ENCODE measurements at regions of chr6 and their contacts with region 1.

Region 1: GRCh38 chr6:133083248-133083967 is 157.7 kb upstream of the EYA4 start:
- DNase-seq: peak in 1 of 2 experiments; percentile 36
- H3K4me3 ChIP-seq: no peak overlapping the region
- H3K27ac ChIP-seq: no peak overlapping the region
- H3K4me1 ChIP-seq: no peaks in the 10 kb centered on the region
- H3K27me3 ChIP-seq: no peaks in the 10 kb centered on the region
- CTCF ChIP-seq: no peak

Region 2: DNA sequence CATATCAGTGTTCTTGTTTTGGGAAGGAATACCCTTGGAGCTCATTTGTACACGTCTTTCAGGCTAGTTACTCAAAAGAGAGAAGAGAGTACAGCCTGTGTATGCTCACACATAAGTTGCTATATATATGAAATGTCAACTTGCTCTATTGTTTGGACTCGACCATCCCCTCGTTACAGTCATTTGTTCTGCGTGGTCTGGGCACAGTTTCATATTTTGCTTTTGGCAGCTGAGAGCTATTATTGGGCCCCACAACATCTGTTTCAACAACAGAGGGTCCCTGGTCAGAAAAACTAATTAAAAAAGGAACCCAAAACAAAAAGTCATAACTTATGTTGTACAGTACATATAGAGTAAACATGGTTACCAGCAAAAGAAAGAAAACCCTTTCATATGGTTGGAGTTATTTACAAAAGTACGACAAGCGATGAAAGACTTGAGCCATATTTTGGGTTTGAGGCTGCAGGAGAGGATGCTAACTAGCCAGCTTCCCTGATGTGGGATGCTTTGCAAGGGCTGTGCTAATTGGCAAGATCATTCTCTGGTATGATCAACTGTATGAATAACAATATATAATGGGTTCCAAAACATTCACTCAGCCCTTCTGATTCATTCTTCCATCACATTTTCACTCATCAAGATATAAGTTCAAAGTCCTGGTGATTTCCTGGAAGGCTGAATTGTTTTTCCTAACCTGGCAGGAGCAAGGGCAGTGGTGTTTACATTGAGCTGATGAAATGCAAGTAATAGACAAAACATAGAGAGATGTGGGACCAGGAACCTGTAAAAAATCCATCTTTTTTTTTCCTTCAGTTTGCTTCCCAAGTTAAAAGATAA is 131.2 kb before region 1 on chr6:
- CTCF ChIA-PET with region 1: no interaction called
- POLR2A ChIA-PET with region 1: no interaction called
- intact Hi-C with region 1: no loop called
- DNase-seq: no peak
- H3K4me3 ChIP-seq: no peak overlapping the region
- H3K27ac ChIP-seq: no peak overlapping the region
- H3K4me1 ChIP-seq: no peaks in the 10 kb centered on the region
- H3K27me3 ChIP-seq: no peaks in the 10 kb centered on the region
- CTCF ChIP-seq: no peak

Region 3: GRCh38 chr6:133033263-133033662 is 50.1 kb before region 1 on chr6:
- CTCF ChIA-PET with region 1: no interaction called
- POLR2A ChIA-PET with region 1: no interaction called
- intact Hi-C with region 1: no loop called
- DNase-seq: no peak
- H3K4me3 ChIP-seq: no peak overlapping the region
- H3K27ac ChIP-seq: no peak overlapping the region
- H3K4me1 ChIP-seq: no peaks in the 10 kb centered on the region
- H3K27me3 ChIP-seq: no peaks in the 10 kb centered on the region
- CTCF ChIP-seq: no peak

Region 4: GRCh38 chr6:133218852-133219251 is 135.4 kb after region 1 on chr6:
- CTCF ChIA-PET with region 1: no interaction called
- POLR2A ChIA-PET with region 1: no interaction called
- intact Hi-C with region 1: no loop called
- DNase-seq: no peak
- H3K4me3 ChIP-seq: no peak overlapping the region
- H3K27ac ChIP-seq: no peak overlapping the region
- H3K4me1 ChIP-seq: no peaks in the 10 kb centered on the region
- H3K27me3 ChIP-seq: no peaks in the 10 kb centered on the region
- CTCF ChIP-seq: no peak

Region 5: DNA sequence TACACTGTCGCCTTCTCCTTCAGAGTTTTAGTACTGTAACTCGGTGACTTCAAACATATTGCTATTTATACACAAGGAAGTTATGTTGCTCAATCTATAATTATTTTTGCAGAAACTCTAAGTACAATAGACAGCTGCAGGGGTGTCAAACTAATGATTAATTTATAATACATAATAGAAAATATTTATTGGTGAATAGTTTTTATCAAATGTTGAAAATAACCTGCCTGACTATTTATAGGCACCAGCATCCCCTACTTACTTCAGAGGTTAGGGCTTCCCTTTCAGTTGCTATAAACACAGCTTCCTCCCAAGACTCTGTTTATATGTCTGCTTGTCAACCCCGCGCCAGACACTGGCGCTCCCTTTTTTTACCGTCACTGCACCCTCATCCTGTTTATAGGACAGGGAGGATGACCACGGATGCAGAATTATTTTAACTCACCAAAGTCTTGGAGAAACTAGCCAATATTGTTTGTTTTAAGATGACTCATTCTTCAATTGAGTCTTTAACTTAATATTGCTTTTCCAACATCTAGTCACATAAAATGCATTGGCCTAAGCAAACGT is 1641.4 kb after region 1 on chr6:
- CTCF ChIA-PET with region 1: interaction called, 11 read pairs
- POLR2A ChIA-PET with region 1: no interaction called
- intact Hi-C with region 1: no loop called
- DNase-seq: no peak
- H3K4me3 ChIP-seq: no peak overlapping the region
- H3K27ac ChIP-seq: no peak overlapping the region
- H3K4me1 ChIP-seq: no peaks in the 10 kb centered on the region
- H3K27me3 ChIP-seq: no peaks in the 10 kb centered on the region
- CTCF ChIP-seq: no peak